ENCODE measurements at regions of chr1 and their contacts with region 1.

Region 1: GRCh38 chr1:151585622-151586021 is 26.2 kb upstream of the SNX27 start:
- DNase-seq: peak; percentile 72 to 93
- H3K4me3 ChIP-seq: no peak overlapping the region
- H3K27ac ChIP-seq: peak overlapping the region; percentile 79
- H3K4me1 ChIP-seq: peaks cover 62% of the 10 kb centered on the region
- H3K27me3 ChIP-seq: no peaks in the 10 kb centered on the region
- CTCF ChIP-seq: 0 out of 2 replicates have a peak, but pooled peaks have one; percentile 2

Region 2: DNA sequence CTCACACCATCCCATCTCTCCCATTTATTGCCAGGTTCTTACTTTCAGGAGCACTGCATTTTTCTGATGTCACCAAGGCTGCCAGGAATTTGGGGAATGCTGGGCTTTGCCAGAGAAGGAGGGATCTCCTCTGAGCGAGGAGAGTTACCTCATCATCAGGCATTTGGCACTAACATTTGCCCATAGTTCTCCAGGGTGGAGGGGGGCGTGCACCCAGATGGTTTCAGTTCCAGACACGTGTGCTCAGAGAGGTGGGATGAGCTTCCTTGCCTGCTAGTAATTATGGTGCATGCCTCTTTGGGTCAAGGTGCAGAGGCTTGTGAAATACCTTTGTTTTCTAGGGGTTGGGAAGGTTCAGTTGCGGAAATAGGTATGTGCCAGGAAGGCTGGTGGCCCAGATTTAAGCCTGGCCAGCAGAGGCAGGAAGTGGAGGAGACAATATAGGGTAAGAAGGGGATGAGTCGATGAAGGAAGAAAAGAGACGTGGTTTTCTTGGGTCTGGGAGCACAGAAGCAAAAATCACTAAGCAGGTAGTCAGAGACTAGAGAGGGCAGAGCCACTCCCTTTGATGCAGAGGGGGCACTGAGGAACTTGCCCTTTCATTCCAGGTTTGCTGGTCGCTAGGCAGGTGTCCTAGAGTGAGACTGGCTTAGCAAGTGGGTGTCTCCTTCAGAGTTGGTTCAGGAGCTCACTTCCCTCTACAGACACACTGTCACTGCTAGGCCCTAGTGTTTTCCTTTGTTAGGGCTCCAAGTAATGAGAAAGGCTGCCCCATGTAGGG is 38.3 kb before region 1 on chr1:
- CTCF ChIA-PET with region 1: no interaction called
- POLR2A ChIA-PET with region 1: interaction called, 3 read pairs
- intact Hi-C with region 1: loop called (anchors 1 kb)
- DNase-seq: peak; percentile 92 to 99
- H3K4me3 ChIP-seq: peak overlapping the region; percentile 24; the same call in 1 of the 2 replicates
- H3K27ac ChIP-seq: peak overlapping the region; percentile 99
- H3K4me1 ChIP-seq: peaks cover 87% of the 10 kb centered on the region
- H3K27me3 ChIP-seq: no peaks in the 10 kb centered on the region
- CTCF ChIP-seq: no peak; the same call in 1 of the 2 replicates

Region 3: GRCh38 chr1:151635479-151636072 is 50.0 kb after region 1 on chr1:
- CTCF ChIA-PET with region 1: no interaction called
- POLR2A ChIA-PET with region 1: no interaction called
- intact Hi-C with region 1: no loop called
- DNase-seq: no peak
- H3K4me3 ChIP-seq: no peak overlapping the region
- H3K27ac ChIP-seq: no peak overlapping the region
- H3K4me1 ChIP-seq: no peaks in the 10 kb centered on the region
- H3K27me3 ChIP-seq: no peaks in the 10 kb centered on the region
- CTCF ChIP-seq: no peak